ENCODE measurements at regions of chr17 and their contacts with region 1.

Region 1: GRCh38 chr17:77247048-77247541 is 106.3 kb downstream of the SEC14L1 start:
- DNase-seq: peak in 1 of 2 donors; percentile 87
- H3K4me3 ChIP-seq: peak overlapping the region; percentile 62 to 71
- H3K27ac ChIP-seq: peak overlapping the region in 1 of 2 donors; percentile 36
- H3K4me1 ChIP-seq: peaks cover 5 to 8% of the 10 kb centered on the region in 2 donors
- H3K27me3 ChIP-seq: no peaks in the 10 kb centered on the region
- CTCF ChIP-seq: peak; percentile 98 to 100 (median 99)

Region 2: GRCh38 chr17:77088455-77089123 is 158.5 kb before region 1 on chr17:
- intact Hi-C with region 1: loop called (anchors 1 kb)
- DNase-seq: peak; percentile 81 to 98
- H3K4me3 ChIP-seq: peak overlapping the region; percentile 79 to 90
- H3K27ac ChIP-seq: peak overlapping the region; percentile 89 to 92
- H3K4me1 ChIP-seq: peaks cover 0 to 16% of the 10 kb centered on the region in 2 donors
- H3K27me3 ChIP-seq: no peaks in the 10 kb centered on the region
- CTCF ChIP-seq: peak; percentile 78 to 91 (median 81)

Region 3: DNA sequence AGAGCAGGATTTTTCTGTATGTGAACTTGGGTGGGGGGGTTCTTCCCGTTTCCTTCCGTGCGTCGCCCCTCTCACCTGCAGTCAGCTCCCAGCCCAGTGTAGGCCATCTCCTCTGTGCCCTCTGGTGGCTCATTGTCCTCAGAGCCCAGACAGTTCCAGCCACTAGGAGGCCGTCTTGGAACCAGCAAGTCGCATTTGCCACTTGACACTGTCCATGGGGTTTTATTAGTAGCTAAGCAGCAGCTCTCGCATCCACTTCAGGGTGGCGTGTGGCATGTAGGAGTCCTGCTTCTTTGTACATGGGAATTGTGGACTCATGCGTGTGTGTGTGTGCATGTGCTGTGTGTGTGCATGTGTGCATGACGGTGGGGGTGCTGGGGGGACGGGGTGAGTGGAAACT is 32.4 kb before region 1 on chr17:
- intact Hi-C with region 1: loop called (anchors 2 kb)
- DNase-seq: no peak
- H3K4me3 ChIP-seq: no peak overlapping the region
- H3K27ac ChIP-seq: no peak overlapping the region
- H3K4me1 ChIP-seq: no peaks in the 10 kb centered on the region
- H3K27me3 ChIP-seq: no peaks in the 10 kb centered on the region
- CTCF ChIP-seq: peak; percentile 9 to 36 (median 23)

Measured in ascending aorta (tissue), 2 donors.